ENCODE measurements at regions of chr19 and their contacts with region 1.

Region 1: DNA sequence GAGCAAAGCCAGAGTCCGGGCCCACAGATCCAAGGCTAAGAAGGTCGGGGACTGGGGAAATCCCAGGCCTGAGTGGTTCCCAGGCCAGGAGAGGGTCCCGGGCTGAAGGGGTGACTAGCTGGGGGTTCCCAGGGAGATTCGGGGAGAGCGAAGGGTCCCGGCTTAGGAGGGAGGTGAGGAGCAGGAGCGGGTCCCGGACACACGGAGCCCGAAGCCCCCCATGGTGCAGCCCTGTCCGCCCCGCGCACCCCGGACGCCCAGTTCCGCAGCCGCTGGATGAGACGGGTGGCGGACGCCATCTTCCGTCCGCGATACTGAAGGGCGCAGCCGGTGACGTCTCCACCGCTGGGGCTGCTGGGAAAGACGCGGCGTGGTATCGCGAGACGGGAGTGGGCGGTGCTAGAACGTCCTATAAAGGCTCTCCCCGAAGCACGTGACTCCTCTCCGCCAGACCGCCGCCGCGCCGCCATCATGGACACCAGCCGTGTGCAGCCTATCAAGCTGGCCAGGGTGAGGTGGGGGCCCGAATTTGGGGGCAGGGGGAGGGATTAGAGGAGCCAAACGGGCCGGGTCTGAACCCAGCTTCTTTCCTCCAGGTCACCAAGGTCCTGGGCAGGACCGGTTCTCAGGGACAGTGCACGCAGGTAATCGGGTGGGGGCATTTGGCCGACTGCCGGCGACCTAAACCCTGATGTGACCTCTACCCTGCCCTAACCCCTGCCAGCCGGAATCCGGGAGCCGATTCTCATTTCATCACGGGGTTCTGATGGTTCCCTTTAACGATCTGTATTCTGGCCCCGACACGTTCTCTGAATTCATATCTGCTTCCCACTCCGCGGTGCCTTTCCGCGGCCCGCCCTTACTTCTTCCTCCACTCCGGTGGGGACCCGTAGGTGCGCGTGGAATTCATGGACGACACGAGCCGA is at the starts of genes NDUFA7 and RPS28:
- DNase-seq: peak; percentile 94
- ATAC-seq: peak; percentile 94
- H3K4me3 ChIP-seq: peak within 1 kb of the TSS; percentile 82
- H3K27ac ChIP-seq: peak within 1 kb of the TSS; percentile 86
- H3K4me1 ChIP-seq: peaks cover 9% of the 10 kb centered on the region
- H3K27me3 ChIP-seq: no peaks in the 10 kb centered on the region
- CTCF ChIP-seq: peak; percentile 36
- POLR2A ChIP-seq: peak; percentile 93
- RAD21 ChIP-seq: peak; percentile 31; the same call in 1 of the 2 replicates
- total RNA-seq, gene NDUFA7: 15.8 and 20.6 TPM in 2 replicates
- total RNA-seq, gene RPS28: 104 and 143 TPM in 2 replicates

Region 2: GRCh38 chr19:8242211-8242821 is 79.0 kb before region 1 on chr19:
- CTCF ChIA-PET with region 1: no interaction called
- POLR2A ChIA-PET with region 1: interaction called, 12 read pairs
- dilution Hi-C with region 1: no loop called
- in situ Hi-C with region 1: no loop called
- intact Hi-C with region 1: no loop called
- DNase-seq: no peak
- ATAC-seq: no peak
- H3K4me3 ChIP-seq: no peak overlapping the region
- H3K27ac ChIP-seq: no peak overlapping the region
- H3K4me1 ChIP-seq: peaks cover 10% of the 10 kb centered on the region; the same call in 1 of the 2 replicates
- H3K27me3 ChIP-seq: peaks cover 2% of the 10 kb centered on the region; the same call in 1 of the 2 replicates
- CTCF ChIP-seq: no peak
- POLR2A ChIP-seq: no peak
- RAD21 ChIP-seq: no peak

Region 3: DNA sequence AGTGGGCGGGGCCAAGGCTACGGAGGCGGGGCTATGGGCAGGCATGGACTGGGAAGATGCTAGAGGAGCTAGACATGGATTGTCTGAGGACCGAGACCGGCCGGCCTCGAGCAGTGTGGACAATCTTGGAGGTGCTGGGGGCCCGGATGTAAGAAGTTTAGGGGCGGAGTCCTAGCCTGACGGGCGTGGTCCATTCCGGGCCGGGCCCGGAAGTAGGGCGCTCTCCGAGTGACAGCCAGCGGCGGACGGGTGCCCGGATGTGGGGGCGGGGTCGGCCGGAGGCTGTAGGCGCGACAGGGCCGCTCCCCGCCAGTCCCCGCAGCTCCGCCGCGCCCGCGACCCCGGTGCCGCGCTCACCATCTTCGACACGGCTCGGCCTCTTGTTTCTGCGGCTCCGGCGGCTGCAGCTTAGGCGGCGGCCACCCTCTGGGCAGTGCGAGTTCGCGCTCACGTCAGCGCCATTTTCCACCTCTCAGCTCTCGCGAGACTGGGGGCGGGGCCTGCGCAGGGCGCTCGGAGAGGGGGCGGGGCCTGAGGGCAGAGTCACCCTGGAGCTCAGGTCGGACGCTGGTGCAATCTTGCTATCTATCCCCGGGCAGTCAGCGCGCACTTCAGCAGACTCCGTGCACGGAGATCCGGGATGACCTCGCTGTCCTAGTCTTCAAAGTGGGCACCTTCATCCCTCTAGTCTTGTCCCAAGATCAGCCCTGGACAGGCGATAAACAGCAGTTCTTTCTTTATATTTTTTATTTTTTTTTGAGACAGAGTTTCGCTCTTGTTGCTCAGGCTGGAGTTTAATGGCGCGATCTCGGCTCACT is 192.6 kb after region 1 on chr19 and contains the start of gene ZNF414:
- CTCF ChIA-PET with region 1: no interaction called
- POLR2A ChIA-PET with region 1: interaction called, 11 read pairs
- dilution Hi-C with region 1: no loop called
- in situ Hi-C with region 1: no loop called
- intact Hi-C with region 1: no loop called
- DNase-seq: peak; percentile 95
- ATAC-seq: peak; percentile 96
- H3K4me3 ChIP-seq: peak within 1 kb of the TSS; percentile 84
- H3K27ac ChIP-seq: peak within 1 kb of the TSS; percentile 98
- H3K4me1 ChIP-seq: peaks cover 11% of the 10 kb centered on the region
- H3K27me3 ChIP-seq: no peaks in the 10 kb centered on the region
- CTCF ChIP-seq: no peak
- POLR2A ChIP-seq: peak; percentile 86
- RAD21 ChIP-seq: no peak
- total RNA-seq, gene ZNF414: 1.1 and 3.2 TPM in 2 replicates

Region 4: DNA sequence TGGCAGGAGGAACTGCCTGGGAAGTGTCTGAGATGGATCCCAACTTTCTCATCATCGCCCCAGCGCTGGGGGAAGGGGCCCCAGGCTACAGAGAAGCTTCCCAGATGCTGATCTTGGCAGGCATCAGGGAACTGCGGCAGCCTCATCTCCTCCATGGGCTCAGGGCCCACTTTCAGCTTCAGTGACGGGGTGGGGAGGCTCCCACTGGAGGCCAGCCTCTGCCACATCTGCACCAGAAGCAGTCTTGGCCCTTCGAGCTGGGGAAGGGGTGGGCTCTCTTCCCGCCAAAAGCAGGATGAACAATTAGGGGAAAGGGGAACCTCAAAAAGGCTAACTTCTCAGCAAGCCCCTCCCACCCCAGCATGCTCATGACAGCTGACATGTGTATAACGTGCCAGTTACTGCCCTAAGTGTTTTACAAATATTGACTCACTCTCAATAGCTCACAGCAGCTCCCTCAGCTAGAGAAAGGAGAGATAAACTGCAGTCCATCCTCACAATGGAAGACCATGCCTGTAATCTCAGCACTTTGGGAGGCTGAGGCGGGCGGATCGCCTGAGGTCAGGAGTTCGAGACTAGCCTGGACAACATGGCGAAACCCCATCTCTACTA is 1917.0 kb after region 1 on chr19:
- CTCF ChIA-PET with region 1: no interaction called
- POLR2A ChIA-PET with region 1: no interaction called
- dilution Hi-C with region 1: no loop called
- in situ Hi-C with region 1: no loop called
- intact Hi-C with region 1: no loop called
- DNase-seq: peak; percentile 91
- ATAC-seq: peak; percentile 89
- H3K4me3 ChIP-seq: no peak overlapping the region
- H3K27ac ChIP-seq: peak overlapping the region; percentile 66
- H3K4me1 ChIP-seq: peaks cover 12% of the 10 kb centered on the region
- H3K27me3 ChIP-seq: no peaks in the 10 kb centered on the region
- CTCF ChIP-seq: no peak
- POLR2A ChIP-seq: no peak
- RAD21 ChIP-seq: 0 out of 2 replicates have a peak, but pooled peaks have one; percentile 9